ENCODE measurements at regions of chr6 and their contacts with region 1.

Region 1: DNA sequence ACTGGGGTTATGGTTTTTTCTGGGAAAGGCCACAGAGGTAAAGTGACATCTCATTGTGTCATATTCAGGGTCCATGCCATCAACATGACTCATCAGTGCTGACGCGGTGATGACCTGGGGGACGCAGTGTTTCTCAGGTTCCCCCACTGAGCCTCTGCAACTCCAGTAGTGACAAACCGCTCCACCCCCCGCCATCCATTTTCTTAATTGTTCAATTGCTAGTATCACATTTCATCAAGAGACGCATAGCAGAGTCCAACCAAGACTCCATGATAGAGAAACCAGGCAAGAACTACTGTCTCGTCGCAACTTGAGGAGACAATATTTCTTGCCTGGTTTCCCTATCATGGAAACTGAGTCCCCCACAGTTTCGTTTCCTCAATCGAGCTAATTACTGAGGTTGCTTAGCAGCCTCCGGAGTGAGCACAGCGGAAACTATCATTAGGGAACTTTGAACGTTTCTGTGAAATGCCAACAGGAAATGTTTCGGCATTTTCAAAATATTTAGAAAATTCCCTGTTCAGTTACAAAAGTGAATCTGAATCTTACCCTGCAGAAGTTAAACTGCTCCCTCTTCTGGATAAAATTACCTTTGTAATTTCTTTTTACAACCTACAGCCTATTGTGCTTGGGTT is 12.2 kb upstream of the SERPINB1 start:
- DNase-seq: peak; percentile 35 to 94 (median 40)
- H3K4me3 ChIP-seq: peak overlapping the region; percentile 39 to 42
- H3K4me3 Mint-ChIP-seq: peak overlapping the region; percentile 71 to 95 (median 81)
- H3K27ac ChIP-seq: peak overlapping the region; percentile 92
- H3K27ac Mint-ChIP-seq: peak overlapping the region; percentile 87 to 100 (median 95)
- H3K4me1 ChIP-seq: peaks cover 70% of the 10 kb centered on the region
- H3K4me1 Mint-ChIP-seq: peaks cover 48 to 75% (median 62%) of the 10 kb centered on the region in 4 donors
- H3K27me3 ChIP-seq: no peaks in the 10 kb centered on the region
- H3K27me3 Mint-ChIP-seq: no peaks in the 10 kb centered on the region

Region 2: DNA sequence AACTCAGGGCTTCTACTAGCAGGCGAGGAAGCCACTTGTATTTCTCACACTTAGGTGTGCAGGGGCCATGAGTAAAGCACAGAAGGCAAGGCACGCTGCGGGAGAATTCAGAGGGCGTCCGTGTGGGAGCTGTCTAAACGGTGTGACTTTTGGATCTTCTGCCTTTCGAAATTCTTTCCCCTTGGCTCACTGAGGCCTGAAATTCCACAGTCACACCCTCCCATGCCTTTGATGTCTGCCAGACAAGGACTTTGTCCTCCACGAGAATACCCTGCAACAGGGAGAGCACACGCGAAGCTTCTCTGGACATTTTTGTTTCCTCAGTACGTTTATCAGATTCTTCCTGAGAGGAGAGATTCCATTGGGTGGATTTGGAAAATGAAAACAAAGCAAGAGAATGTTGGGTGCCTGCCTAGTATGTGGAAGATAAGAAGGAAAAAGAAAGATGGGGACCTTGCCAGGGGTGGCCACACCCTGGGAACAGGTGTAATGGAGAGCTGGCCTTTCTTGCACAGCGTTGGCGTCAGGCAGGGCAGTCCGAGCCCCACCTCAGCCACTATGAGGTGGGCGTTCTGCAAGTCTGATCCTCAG is 338.8 kb before region 1 on chr6:
- CTCF ChIA-PET with region 1: no interaction called
- POLR2A ChIA-PET with region 1: no interaction called
- intact Hi-C with region 1: no loop called
- DNase-seq: no peak
- H3K4me3 ChIP-seq: no peak overlapping the region
- H3K4me3 Mint-ChIP-seq: no peak overlapping the region
- H3K27ac ChIP-seq: no peak overlapping the region
- H3K27ac Mint-ChIP-seq: no peak overlapping the region
- H3K4me1 ChIP-seq: no peaks in the 10 kb centered on the region
- H3K4me1 Mint-ChIP-seq: no peaks in the 10 kb centered on the region
- H3K27me3 ChIP-seq: no peaks in the 10 kb centered on the region
- H3K27me3 Mint-ChIP-seq: peaks cover 11 to 31% of the 10 kb centered on the region in 2 donors

Region 3: DNA sequence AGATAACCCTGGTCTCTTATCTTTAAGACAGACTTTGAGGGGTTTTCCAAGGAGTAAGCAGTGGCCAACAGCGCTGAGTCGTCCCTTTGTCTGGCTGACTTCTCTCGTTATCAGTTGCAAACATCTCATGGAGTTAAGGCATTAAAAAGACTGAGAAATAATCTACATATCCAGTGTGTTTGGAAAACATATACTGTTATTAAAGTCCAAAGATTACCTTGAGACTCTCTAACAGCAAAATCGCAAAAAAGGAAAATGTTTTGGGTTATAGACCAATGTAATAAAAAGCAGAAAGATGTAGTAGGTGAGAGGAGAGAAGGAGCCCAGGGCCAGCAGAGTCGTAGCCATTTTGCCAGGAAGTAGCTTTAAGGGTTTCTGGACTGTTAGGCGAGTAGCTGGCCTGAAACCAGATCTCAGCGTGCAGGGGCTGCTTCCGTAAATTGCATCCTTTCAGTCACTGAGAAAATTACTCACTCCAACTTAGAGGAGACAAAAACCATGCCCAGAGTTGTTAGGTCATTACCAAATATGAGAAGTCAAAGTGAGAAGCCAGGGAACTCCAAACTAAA is 127.8 kb before region 1 on chr6:
- CTCF ChIA-PET with region 1: no interaction called
- POLR2A ChIA-PET with region 1: no interaction called
- intact Hi-C with region 1: no loop called
- DNase-seq: no peak
- H3K4me3 ChIP-seq: no peak overlapping the region
- H3K4me3 Mint-ChIP-seq: no peak overlapping the region
- H3K27ac ChIP-seq: no peak overlapping the region
- H3K27ac Mint-ChIP-seq: no peak overlapping the region
- H3K4me1 ChIP-seq: no peaks in the 10 kb centered on the region
- H3K4me1 Mint-ChIP-seq: no peaks in the 10 kb centered on the region
- H3K27me3 ChIP-seq: peaks cover 3% of the 10 kb centered on the region
- H3K27me3 Mint-ChIP-seq: peaks cover 4 to 10% of the 10 kb centered on the region in 2 donors

Region 4: DNA sequence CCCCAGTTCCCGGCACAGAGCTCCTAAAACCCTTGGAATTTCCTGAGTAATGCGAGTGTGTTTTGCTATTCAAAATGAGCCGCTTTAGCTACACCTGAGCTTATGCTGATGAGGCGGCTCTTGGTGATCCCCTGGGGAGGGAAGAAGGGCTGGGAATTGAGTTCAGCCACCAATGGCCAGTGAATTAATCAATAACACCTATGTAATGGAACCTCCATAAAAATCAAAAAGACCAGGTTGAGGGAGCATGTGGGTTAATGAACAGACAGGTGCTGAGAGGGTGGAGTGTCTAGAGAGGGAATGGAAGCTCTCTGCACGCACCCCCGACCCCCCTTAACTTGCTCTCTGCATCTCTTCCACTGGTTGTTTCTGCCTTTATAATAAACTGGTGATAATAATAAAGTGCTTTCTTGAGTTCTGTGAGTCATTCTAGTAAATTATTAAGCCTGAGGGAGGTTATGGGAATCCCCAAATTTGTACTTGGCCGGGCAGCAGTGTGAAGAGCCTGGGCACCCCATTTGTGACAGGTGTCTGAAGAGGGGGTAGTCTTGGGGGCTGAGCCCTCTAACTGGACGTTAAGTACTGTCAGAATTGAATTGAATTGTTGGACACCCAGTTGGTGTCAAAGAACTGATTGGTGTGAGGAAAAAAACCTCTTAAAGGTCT is 12.4 kb after region 1 on chr6:
- CTCF ChIA-PET with region 1: interaction called, 14 read pairs
- POLR2A ChIA-PET with region 1: interaction called, 7 read pairs
- intact Hi-C with region 1: loop called (anchors 1 kb)
- DNase-seq: no peak
- H3K4me3 ChIP-seq: no peak overlapping the region
- H3K4me3 Mint-ChIP-seq: no peak overlapping the region
- H3K27ac ChIP-seq: no peak overlapping the region
- H3K27ac Mint-ChIP-seq: peak overlapping the region in 1 of 7 donors; percentile 48
- H3K4me1 ChIP-seq: peaks cover 36% of the 10 kb centered on the region
- H3K4me1 Mint-ChIP-seq: peaks cover 34 to 67% (median 48%) of the 10 kb centered on the region in 4 donors
- H3K27me3 ChIP-seq: no peaks in the 10 kb centered on the region
- H3K27me3 Mint-ChIP-seq: no peaks in the 10 kb centered on the region

Region 5: GRCh38 chr6:2891768-2892170 is 37.9 kb after region 1 on chr6:
- CTCF ChIA-PET with region 1: interaction called, 135 read pairs
- POLR2A ChIA-PET with region 1: interaction called, 55 read pairs
- intact Hi-C with region 1: no loop called
- DNase-seq: peak; percentile 79 to 94 (median 85)
- H3K4me3 ChIP-seq: no peak overlapping the region
- H3K4me3 Mint-ChIP-seq: peak overlapping the region; percentile 77 to 88 (median 81)
- H3K27ac ChIP-seq: peak overlapping the region; percentile 49
- H3K27ac Mint-ChIP-seq: peak overlapping the region; percentile 91 to 96 (median 95)
- H3K4me1 ChIP-seq: peaks cover 55% of the 10 kb centered on the region
- H3K4me1 Mint-ChIP-seq: peaks cover 40 to 75% (median 60%) of the 10 kb centered on the region in 4 donors
- H3K27me3 ChIP-seq: no peaks in the 10 kb centered on the region
- H3K27me3 Mint-ChIP-seq: no peaks in the 10 kb centered on the region

Region 6: DNA sequence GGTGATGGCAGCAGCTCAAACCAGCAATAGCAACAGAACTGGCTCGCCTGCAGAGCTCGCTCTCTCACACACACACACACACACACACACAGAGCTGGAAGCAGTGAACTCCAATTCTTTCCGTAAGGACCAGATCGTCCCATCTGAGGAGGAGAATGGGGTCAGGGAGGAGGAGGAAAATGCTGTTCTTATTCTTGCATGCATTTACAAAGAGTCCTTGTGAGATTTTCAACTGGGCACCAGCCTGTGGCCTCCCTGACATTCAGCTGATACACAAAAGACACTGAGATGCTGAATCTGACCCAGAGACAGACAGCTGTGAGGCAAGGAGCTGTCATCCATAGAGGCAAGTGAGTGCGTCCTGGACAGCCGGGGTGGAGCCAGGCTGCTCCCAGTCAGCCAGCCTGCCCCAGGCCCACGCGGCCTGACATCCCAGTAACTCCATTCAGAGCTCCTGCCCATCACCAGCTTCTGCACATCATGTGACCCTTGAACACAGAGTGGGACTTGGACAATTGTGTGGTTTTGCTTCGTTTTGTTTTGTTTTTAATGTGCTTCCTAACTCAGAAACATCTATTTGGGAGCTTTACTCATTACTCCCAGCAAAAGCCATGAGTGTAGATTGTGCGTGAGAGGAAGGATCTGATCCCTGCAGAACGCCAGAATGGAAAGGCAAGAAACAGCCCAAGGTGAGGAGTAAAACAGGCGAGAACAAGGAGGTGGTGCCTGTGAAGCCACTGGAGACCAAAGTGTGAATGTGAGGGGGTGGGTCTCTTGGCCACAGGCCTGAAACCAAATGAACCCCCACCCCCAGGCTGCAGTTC is 47.2 kb after region 1 on chr6:
- CTCF ChIA-PET with region 1: interaction called, 135 read pairs
- POLR2A ChIA-PET with region 1: interaction called, 55 read pairs
- intact Hi-C with region 1: no loop called
- DNase-seq: peak in 1 of 5 donors; percentile 22
- H3K4me3 ChIP-seq: peak overlapping the region; percentile 42 to 92
- H3K4me3 Mint-ChIP-seq: peak overlapping the region; percentile 99 to 100 (median 99)
- H3K27ac ChIP-seq: peak overlapping the region; percentile 82
- H3K27ac Mint-ChIP-seq: peak overlapping the region; percentile 91 to 99 (median 98)
- H3K4me1 ChIP-seq: peaks cover 57% of the 10 kb centered on the region
- H3K4me1 Mint-ChIP-seq: peaks cover 44 to 66% (median 54%) of the 10 kb centered on the region in 4 donors
- H3K27me3 ChIP-seq: no peaks in the 10 kb centered on the region
- H3K27me3 Mint-ChIP-seq: no peaks in the 10 kb centered on the region

Region 7: GRCh38 chr6:2911171-2911570 is 57.3 kb after region 1 on chr6:
- CTCF ChIA-PET with region 1: interaction called, 223 read pairs
- POLR2A ChIA-PET with region 1: interaction called, 59 read pairs
- intact Hi-C with region 1: no loop called
- DNase-seq: no peak
- H3K4me3 ChIP-seq: no peak overlapping the region
- H3K4me3 Mint-ChIP-seq: no peak overlapping the region
- H3K27ac ChIP-seq: no peak overlapping the region
- H3K27ac Mint-ChIP-seq: no peak overlapping the region
- H3K4me1 ChIP-seq: peaks cover 6% of the 10 kb centered on the region
- H3K4me1 Mint-ChIP-seq: peaks cover 15 to 31% (median 22%) of the 10 kb centered on the region in 4 donors
- H3K27me3 ChIP-seq: no peaks in the 10 kb centered on the region
- H3K27me3 Mint-ChIP-seq: no peaks in the 10 kb centered on the region